ENCODE measurements at regions of chr11 and their contacts with region 1.

Region 1: DNA sequence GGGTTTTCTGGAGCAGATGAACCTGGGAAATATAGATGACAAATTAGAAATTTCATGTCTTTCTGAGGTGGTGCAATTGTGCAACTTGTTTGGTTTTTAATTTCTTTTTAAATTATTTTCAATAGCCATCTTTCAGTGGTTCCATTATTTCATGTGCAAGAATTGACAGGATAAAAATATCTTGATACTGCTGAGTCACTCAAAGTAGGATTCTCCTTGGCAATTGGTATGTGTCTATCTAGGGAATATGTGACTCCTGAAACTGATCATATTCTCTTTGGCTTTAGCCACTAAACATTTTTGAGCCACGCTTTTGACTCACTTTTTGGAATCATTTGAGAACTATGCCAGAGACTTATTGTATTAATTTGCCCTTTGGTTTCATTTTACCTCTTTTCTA is 331.5 kb downstream of the KCNA4 start:
- DNase-seq: no peak
- H3K4me3 Mint-ChIP-seq: no peak overlapping the region
- H3K27ac Mint-ChIP-seq: no peak overlapping the region
- H3K4me1 Mint-ChIP-seq: no peaks in the 10 kb centered on the region
- H3K27me3 Mint-ChIP-seq: no peaks in the 10 kb centered on the region

Region 2: DNA sequence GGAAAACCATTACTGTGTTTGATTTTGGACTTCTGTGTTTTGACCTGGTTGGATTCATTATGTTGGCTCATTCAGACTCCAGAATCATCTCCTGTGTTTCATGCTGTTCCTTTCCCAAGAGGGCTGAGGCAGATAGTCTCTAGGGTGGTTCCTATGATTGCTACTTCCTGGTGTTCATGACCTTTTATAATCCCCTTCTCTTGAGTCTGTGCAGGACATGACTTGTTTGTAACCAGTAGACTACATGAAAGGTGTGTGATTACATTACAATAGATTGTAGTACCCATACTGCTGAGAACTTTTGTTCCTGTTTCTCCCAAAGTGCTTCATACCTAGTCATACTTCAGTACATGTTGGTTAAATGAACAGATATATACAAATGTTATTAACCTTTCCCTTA is 876.6 kb before region 1 on chr11:
- intact Hi-C with region 1: loop called (anchors 5 kb)
- DNase-seq: no peak
- H3K4me3 Mint-ChIP-seq: no peak overlapping the region
- H3K27ac Mint-ChIP-seq: no peak overlapping the region
- H3K4me1 Mint-ChIP-seq: no peaks in the 10 kb centered on the region
- H3K27me3 Mint-ChIP-seq: no peaks in the 10 kb centered on the region

Region 3: GRCh38 chr11:29584342-29584741 is 101.0 kb before region 1 on chr11:
- intact Hi-C with region 1: no loop called
- DNase-seq: no peak
- H3K4me3 Mint-ChIP-seq: no peak overlapping the region
- H3K27ac Mint-ChIP-seq: no peak overlapping the region
- H3K4me1 Mint-ChIP-seq: no peaks in the 10 kb centered on the region
- H3K27me3 Mint-ChIP-seq: no peaks in the 10 kb centered on the region